ENCODE measurements at regions of chr3 and their contacts with region 1.

Region 1: GRCh38 chr3:142028243-142028777 is 121.0 kb downstream of the TFDP2 start:
- DNase-seq: no peak
- H3K4me3 ChIP-seq: peak overlapping the region; percentile 39 to 66 (median 51)
- H3K27ac ChIP-seq: peak overlapping the region; percentile 5 to 14
- H3K4me1 ChIP-seq: no peaks in the 10 kb centered on the region
- H3K27me3 ChIP-seq: no peaks in the 10 kb centered on the region
- CTCF ChIP-seq: peak in 1 of 3 donors; percentile 25
- POLR2A ChIP-seq: no peak

Region 2: DNA sequence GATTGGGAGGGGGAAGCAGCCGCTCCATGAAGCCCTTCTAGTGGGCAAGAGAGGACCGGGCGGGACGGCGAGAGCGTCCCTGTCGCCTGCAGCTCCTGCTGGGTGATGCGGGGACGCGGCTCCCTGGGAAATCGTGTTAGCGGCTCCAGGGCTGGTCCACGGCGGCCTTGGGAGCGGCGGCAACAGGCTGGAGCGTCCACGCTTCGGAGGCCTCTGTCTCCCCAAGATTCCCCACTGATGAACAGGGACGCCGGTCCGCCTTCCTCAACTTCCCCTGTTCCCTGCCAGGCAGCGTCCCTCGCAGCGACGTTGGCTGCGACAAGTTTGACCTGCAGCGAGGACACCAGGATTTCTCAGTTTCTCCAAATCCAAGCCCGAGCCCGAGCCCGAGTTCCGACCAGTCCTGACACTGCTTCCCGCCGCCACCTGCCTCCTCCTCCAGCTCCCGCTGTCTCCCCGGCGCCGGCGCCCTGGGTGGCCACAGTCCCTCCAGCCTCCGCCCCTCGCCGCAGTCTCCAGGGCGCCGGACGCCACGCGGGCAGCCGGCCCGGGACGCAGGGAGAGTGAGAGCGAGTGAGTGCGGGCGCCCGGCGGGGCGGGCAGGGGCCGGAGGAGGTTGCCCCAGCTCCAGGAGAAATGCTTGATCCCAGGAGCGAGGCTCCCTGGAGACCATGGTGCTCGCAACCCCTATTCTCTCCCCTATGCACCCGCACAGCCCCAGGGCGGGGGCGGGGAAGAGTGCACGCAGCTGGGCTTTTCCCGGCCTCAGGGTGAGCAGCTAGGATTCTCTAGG is 368.3 kb before region 1 on chr3:
- intact Hi-C with region 1: no loop called
- DNase-seq: peak; percentile 35 to 66
- H3K4me3 ChIP-seq: peak overlapping the region; percentile 47 to 79 (median 59)
- H3K27ac ChIP-seq: peak overlapping the region in 1 of 2 donors; percentile 17
- H3K4me1 ChIP-seq: peaks cover 0 to 4% of the 10 kb centered on the region in 2 donors
- H3K27me3 ChIP-seq: no peaks in the 10 kb centered on the region
- CTCF ChIP-seq: no peak
- POLR2A ChIP-seq: no peak

Region 3: GRCh38 chr3:142057331-142058085 is 29.2 kb after region 1 on chr3:
- intact Hi-C with region 1: loop called (anchors 1 kb)
- DNase-seq: no peak
- H3K4me3 ChIP-seq: no peak overlapping the region
- H3K27ac ChIP-seq: no peak overlapping the region
- H3K4me1 ChIP-seq: no peaks in the 10 kb centered on the region
- H3K27me3 ChIP-seq: no peaks in the 10 kb centered on the region
- CTCF ChIP-seq: no peak
- POLR2A ChIP-seq: no peak

Region 4: GRCh38 chr3:142087676-142088075 is 59.4 kb after region 1 on chr3:
- intact Hi-C with region 1: loop called (anchors 2 kb)
- DNase-seq: no peak
- H3K4me3 ChIP-seq: no peak overlapping the region
- H3K27ac ChIP-seq: no peak overlapping the region
- H3K4me1 ChIP-seq: no peaks in the 10 kb centered on the region
- H3K27me3 ChIP-seq: no peaks in the 10 kb centered on the region
- CTCF ChIP-seq: no peak
- POLR2A ChIP-seq: no peak

Measured in breast epithelium (tissue), 4 donors.